ENCODE measurements at regions of chr2 and their contacts with region 1.

Region 1: DNA sequence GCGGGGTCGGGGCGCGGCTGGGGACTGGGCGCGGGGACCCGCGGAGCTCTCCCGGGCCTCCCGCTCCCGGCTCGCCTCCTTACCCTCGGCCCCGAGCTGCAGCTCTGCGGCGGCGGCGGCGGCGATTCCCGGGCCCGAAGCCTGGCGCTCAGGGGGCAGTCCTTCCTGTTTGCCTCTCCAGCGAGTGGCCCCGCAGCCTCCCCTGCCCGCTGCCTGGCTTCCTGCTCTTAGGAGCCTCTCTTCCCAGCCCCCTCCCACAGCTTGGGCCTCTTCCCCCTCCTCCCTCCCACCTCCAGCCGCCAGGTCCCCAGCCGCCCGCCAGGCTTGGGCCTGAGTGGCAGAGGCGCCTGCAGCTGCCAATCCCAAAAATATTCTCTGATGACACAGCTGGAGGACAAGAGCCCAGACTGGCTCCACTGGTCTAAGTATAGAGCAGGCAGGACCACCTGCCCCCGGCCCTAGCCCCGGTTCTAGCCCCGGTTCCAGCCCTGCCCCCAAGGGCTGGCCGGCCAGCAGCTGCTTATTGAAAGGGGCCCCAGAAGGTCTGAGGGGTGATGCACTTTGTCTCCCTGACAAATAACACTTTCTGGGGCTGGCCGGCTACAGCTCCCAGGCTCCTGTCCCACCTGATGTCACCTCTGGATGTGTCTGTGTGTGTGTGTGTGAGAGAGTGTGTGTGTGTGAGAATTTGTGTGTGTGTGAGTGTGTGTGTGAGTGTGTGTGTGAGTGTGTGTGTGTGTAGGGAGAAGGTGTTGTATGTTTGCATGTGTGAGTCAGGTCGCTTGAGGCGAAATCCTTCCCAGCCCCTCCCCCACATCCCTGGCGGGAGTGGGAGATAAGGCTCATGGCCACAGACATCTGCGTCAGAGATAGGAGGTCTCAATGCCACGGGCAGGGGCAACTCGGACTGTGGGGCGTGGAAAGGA is at the start of gene OBSL1:
- DNase-seq: peak; percentile 80 to 84
- ATAC-seq: peak; percentile 77 to 90 (median 85)
- H3K4me3 ChIP-seq: peak within 1 kb of the TSS; percentile 9 to 95 (median 70)
- H3K27ac ChIP-seq: peak within 1 kb of the TSS; percentile 65 to 95 (median 88)
- H3K4me1 ChIP-seq: peaks cover 2 to 43% (median 13%) of the 10 kb centered on the region in 9 donors
- H3K27me3 ChIP-seq: peaks cover 0 to 40% (median 0%) of the 10 kb centered on the region in 7 donors
- CTCF ChIP-seq: no peak
- total RNA-seq, gene OBSL1: 161 to 277 (median 171) TPM

Region 2: GRCh38 chr2:219597552-219598307 is 26.2 kb after region 1 on chr2 and contains the start of gene STK11IP:
- intact Hi-C with region 1: loop called in 1 of 10 experiments (anchors 2 kb)
- DNase-seq: peak; percentile 94 to 98
- ATAC-seq: peak; percentile 96 to 99 (median 98)
- H3K4me3 ChIP-seq: peak within 1 kb of the TSS; percentile 46 to 80 (median 70)
- H3K27ac ChIP-seq: peak within 1 kb of the TSS; percentile 87 to 97 (median 94)
- H3K4me1 ChIP-seq: peaks cover 0 to 29% (median 10%) of the 10 kb centered on the region in 9 donors
- H3K27me3 ChIP-seq: no peaks in the 10 kb centered on the region
- CTCF ChIP-seq: no peak
- total RNA-seq, gene STK11IP: 7.2 to 18.2 (median 12.9) TPM

Region 3: DNA sequence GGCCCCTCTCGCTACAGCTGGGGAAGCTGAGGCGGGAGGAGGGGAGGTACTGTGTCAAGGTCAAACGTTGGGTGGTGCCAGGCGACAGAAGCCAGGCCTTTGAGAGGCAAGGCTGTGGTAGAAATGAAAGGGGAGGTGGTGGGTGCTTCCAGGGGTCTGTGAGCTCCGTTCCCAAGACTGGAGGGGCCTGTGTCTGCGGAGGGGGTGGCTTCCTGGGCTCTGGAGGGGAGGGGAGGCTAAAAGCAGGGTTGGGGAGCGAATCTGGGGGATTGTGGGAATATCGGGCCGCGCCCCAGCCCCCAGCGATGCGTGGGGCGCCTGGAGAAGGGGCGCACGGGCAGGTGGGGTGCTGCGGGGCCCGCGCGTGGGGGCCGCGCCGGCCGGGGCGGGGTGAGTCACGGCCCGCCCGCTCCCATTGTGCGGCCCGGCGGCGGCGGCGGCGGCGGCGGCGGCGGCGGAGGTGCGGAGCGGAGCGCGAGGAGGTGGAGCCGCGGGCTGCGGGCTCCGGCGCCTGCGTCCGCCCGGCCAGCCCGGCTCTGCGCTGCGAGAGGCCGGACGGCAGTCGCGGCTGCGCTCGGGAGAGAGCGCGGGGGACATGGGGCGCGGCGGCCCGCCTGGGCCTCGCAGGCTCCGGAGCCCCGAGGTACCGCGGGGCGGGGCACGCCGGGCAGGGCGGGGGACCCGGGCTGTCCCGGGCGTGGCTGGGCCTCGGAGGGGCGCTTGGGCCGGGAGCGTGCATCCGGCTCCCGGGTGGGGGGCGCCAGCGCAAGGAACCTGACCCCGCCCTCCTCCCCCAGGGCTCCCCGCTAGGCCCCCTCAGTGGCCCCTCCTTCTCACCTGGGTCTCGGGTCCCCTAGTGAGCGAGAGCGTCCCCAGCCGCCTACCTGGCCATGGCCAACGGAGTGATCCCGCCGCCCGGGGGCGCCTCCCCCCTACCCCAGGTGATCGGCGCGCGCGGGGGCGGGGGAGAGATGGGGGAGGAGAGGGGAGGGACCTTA is 55.8 kb after region 1 on chr2 and contains the start of gene SLC4A3:
- intact Hi-C with region 1: loop called in 5 of 10 experiments (anchors 2 to 10 kb)
- DNase-seq: peak in 1 of 2 donors; percentile 55
- ATAC-seq: peak in 7 of 8 donors; percentile 4 to 34 (median 14)
- H3K4me3 ChIP-seq: peak within 1 kb of the TSS in 9 of 10 donors; percentile 50 to 60 (median 58)
- H3K27ac ChIP-seq: peak within 1 kb of the TSS; percentile 79 to 99 (median 94)
- H3K4me1 ChIP-seq: peaks cover 3 to 77% (median 22%) of the 10 kb centered on the region in 9 donors
- H3K27me3 ChIP-seq: peaks cover 0 to 38% (median 9%) of the 10 kb centered on the region in 7 donors
- CTCF ChIP-seq: peak in 4 of 9 donors; percentile 11 to 40 (median 22)
- total RNA-seq, gene SLC4A3: 339 to 671 (median 422) TPM

Measured in heart right ventricle (tissue), 16 donors.